Transverse colon (tissue), 4 donors: ENCODE measurements at regions of chr13 and their contacts with region 1.

Region 1: GRCh38 chr13:40657951-40658350 is 8.5 kb downstream of the FOXO1 start:
- DNase-seq: no peak
- H3K4me3 ChIP-seq: no peak overlapping the region
- H3K27ac ChIP-seq: no peak overlapping the region
- H3K4me1 ChIP-seq: peaks cover 17 to 58% (median 32%) of the 10 kb centered on the region in 4 donors
- H3K27me3 ChIP-seq: no peaks in the 10 kb centered on the region
- CTCF ChIP-seq: no peak
- EP300 ChIP-seq: no peak
- POLR2A ChIP-seq: no peak

Region 2: GRCh38 chr13:40613192-40613818 is 44.6 kb before region 1 on chr13:
- in situ Hi-C with region 1: no loop called
- intact Hi-C with region 1: loop called (anchors 2 kb)
- DNase-seq: peak; percentile 63
- H3K4me3 ChIP-seq: no peak overlapping the region
- H3K27ac ChIP-seq: peak overlapping the region; percentile 54 to 70 (median 60)
- H3K4me1 ChIP-seq: peaks cover 18 to 74% (median 38%) of the 10 kb centered on the region in 4 donors
- H3K27me3 ChIP-seq: no peaks in the 10 kb centered on the region
- CTCF ChIP-seq: no peak
- EP300 ChIP-seq: no peak
- POLR2A ChIP-seq: peak; percentile 33